ENCODE measurements at regions of chr7 and their contacts with region 1.

Region 1: GRCh38 chr7:94154858-94155257 is 150.7 kb upstream of the BET1 start:
- DNase-seq: no peak
- ATAC-seq: no peak
- H3K4me3 ChIP-seq: no peak overlapping the region
- H3K27ac ChIP-seq: no peak overlapping the region
- H3K4me1 ChIP-seq: no peaks in the 10 kb centered on the region
- H3K27me3 ChIP-seq: no peaks in the 10 kb centered on the region
- CTCF ChIP-seq: no peak

Region 2: DNA sequence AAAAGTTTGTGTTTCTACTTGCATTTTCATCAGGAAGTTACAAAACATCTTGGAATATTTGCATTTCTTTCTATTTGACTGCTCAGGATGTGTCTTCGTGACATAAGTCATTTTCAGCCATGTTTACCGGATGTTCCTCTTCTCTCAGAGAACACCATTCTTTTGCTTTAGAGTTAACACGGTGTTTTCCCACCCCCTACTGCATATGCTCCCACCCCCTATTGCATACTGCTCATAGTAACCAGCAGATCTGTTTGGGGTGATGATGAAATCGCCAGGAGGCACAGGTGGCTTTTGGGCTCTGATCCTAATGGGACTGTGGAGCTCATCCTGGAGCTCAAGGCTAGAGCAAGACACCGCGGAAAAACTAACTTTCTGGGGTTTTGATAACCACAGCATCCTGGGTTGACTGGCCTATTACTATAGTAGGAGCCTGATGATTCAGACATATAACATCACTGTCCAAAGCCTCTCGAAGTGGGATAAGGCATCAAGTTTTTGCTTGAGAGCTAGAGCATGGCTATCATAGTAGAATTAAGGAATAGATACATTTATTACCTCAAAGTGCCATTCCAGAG is 85.6 kb before region 1 on chr7:
- intact Hi-C with region 1: no loop called
- DNase-seq: no peak
- ATAC-seq: no peak
- H3K4me3 ChIP-seq: no peak overlapping the region
- H3K27ac ChIP-seq: no peak overlapping the region
- H3K4me1 ChIP-seq: peaks cover 0 to 12% (median 0%) of the 10 kb centered on the region in 9 donors
- H3K27me3 ChIP-seq: peaks cover 0 to 6% (median 0%) of the 10 kb centered on the region in 7 donors
- CTCF ChIP-seq: no peak

Region 3: DNA sequence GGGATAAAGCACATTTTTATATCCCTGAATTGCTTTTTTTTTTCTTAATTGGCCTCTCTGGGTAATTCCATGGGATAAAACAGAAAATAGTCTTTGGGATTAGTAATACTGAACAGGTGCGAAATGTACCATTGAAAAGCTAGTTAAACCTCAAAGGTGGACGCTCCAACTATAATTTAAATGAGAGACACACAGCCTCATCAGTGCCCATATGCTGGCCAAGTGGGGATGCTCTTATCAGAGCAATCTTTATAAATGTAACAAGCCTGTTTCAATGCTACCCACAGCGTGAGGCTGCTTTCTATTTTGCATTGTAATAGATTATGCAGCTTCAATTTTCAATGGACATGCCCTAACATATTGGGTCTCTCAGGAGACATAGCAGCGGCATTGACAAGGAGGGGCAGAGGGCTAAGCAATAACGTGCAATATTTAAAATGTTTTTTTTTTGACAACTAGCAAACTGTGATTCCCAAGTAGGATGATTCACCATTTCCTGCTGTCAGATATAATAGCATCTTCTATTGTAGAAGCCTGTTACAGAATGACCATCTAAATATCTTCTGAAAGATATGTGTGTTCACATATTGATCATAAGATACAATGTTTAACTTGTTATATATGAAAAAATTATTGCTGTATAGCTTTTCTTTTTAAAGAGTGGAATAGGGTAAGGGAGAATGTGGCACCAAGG is 59.4 kb before region 1 on chr7:
- intact Hi-C with region 1: loop called in 1 of 10 experiments (anchors 10 kb)
- DNase-seq: no peak
- ATAC-seq: no peak
- H3K4me3 ChIP-seq: no peak overlapping the region
- H3K27ac ChIP-seq: no peak overlapping the region
- H3K4me1 ChIP-seq: no peaks in the 10 kb centered on the region
- H3K27me3 ChIP-seq: peaks cover 0 to 3% (median 0%) of the 10 kb centered on the region in 7 donors
- CTCF ChIP-seq: no peak

Region 4: DNA sequence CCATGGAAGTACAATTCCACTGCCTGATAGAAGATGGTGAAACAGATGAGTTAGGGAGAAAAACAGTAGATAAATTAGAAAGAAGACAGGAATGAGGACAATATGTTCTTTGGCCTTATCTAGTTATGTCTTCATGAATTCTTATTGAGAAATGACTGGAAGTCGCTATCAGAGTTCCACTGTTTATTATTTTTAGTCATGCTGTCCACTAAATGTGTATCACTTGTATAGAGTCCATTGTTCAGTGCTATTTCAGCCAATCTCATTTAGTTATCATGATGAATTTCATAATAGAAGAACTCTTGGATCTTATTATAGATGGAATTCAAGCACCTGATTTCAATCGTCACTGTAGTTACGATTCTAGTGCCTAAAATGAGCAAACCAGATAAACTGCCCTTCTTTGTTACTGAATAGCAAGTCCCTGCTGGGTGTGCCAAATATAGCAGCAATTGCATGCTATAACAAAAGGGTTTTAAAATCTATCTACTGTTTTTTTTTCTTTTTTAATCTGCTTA is 62.1 kb after region 1 on chr7:
- intact Hi-C with region 1: loop called in 1 of 10 experiments (anchors 10 kb)
- DNase-seq: no peak
- ATAC-seq: peak in 1 of 8 donors; percentile 55
- H3K4me3 ChIP-seq: no peak overlapping the region
- H3K27ac ChIP-seq: no peak overlapping the region
- H3K4me1 ChIP-seq: peaks cover 0 to 5% (median 0%) of the 10 kb centered on the region in 9 donors
- H3K27me3 ChIP-seq: no peaks in the 10 kb centered on the region
- CTCF ChIP-seq: no peak